Activated CD4-positive, alpha-beta T cell treated with anti-CD3 and anti-CD28 coated beads, Interleukin-2, amount 10 ng/mL, durations not matched to agents 24 days and 14 days (primary cell): ENCODE measurements at regions of chr10 and their contacts with region 1.

Region 1: DNA sequence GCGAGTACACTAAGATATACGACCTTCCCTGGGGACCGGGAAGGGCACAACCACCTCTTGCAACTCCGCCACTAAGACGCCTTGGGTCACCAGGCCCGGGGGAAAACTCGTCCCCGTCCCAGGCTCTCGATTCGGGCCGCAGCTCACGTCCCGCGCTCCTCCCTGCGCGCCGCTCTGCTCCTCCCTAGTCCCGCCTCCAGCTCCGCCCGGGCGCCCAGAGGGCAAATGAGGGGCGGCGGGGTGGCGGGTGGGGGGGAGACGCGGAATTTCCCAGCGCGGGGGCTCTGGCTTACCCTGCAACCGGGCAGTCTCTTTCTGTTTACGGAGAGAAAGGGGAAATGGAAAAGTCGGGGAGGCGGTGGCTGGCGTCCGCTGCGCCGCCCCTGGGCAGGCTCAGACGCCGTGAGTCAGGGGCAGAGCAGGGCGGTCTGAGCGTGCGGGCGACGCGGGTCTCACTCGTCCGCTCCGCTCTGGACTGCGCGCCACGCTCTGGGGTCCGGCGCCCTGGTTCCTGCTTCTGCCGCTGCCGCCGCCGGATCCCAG is at the start of gene MAP3K8:
- DNase-seq: peak; percentile 96
- H3K4me3 Mint-ChIP-seq: peak within 1 kb of the TSS; percentile 94
- H3K27ac Mint-ChIP-seq: peak within 1 kb of the TSS; percentile 82
- H3K4me1 Mint-ChIP-seq: peaks cover 55% of the 10 kb centered on the region
- H3K27me3 Mint-ChIP-seq: no peaks in the 10 kb centered on the region
- total RNA-seq, gene MAP3K8: 20.9 and 22.0 TPM in 2 replicates

Region 2: DNA sequence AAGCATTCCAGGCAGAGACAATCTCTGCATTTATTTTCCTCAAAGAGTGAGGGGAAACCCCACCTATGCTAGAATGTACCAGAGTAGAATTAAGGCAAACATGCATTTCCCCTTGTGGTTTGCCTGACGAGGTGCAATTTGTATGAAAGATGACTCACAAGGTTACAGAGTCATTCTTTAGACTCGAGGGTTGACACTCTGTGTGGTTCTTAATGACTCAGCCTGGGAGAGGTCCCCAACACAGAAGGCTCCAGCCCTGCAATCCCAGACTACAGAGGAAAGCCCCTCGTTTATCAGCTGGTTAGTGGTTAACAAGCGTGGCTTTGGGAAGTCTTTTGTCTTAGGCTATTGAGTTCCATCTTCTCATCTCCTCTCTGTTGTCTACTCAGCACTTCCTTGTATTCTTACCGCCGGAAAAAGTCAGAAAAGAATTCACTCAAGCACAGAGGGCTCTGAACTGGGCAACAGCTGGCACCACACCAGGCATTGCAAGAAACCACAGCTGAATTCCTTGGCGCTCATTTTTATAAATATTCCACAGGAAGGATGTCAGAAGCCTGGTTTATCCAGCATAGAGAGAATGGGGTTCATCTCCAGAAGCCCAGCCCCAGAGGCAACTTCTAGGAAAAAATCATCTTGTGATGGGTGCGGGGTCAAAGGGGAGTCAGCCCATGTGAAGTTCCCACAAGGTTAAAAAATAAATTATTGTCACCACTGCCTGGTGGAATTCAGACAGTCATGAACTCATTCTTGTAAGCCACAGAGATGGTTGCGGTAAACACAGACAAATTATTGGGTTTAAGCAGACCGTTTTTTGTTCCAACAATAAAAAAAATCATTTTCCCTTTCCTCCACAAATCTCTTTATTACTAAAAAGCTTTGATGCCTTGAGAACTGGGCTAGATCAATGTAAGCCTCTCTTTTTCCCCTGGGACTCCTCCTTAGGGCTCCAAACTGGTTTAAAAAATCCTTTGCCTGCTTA is 774.5 kb before region 1 on chr10:
- intact Hi-C with region 1: loop called (anchors 10 kb)
- DNase-seq: peak; percentile 89
- H3K4me3 Mint-ChIP-seq: peak overlapping the region; percentile 56
- H3K27ac Mint-ChIP-seq: peak overlapping the region; percentile 67
- H3K4me1 Mint-ChIP-seq: peaks cover 18% of the 10 kb centered on the region
- H3K27me3 Mint-ChIP-seq: peaks cover 46% of the 10 kb centered on the region

Region 3: GRCh38 chr10:30027057-30028005 is 406.5 kb before region 1 on chr10:
- intact Hi-C with region 1: loop called (anchors 1 kb)
- DNase-seq: peak; percentile 98
- H3K4me3 Mint-ChIP-seq: peak overlapping the region; percentile 83
- H3K27ac Mint-ChIP-seq: peak overlapping the region; percentile 86
- H3K4me1 Mint-ChIP-seq: peaks cover 43% of the 10 kb centered on the region
- H3K27me3 Mint-ChIP-seq: peaks cover 20% of the 10 kb centered on the region

Region 4: DNA sequence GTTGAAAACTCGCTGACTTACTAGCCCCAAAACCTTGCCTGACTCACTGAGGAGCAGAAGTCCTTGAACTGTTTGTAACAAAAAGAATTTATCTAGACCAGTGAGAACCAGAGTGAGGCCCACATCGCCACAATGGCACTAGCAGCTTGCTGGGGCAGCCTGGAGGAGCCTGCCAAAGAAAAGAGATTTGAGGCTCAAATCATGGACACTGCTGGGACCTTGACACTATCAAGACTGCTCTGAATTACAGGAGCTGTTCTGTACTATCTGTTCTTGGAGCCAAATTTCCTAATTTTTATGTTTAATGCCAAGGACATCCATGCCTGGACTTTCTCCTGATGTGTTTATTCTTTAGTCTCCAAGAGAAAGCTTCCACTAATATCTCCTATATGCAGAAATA is 292.4 kb before region 1 on chr10:
- intact Hi-C with region 1: no loop called
- DNase-seq: no peak
- H3K4me3 Mint-ChIP-seq: no peak overlapping the region
- H3K27ac Mint-ChIP-seq: no peak overlapping the region
- H3K4me1 Mint-ChIP-seq: no peaks in the 10 kb centered on the region
- H3K27me3 Mint-ChIP-seq: peaks cover 8% of the 10 kb centered on the region

Region 5: GRCh38 chr10:30447125-30447799 is 13.5 kb after region 1 on chr10:
- intact Hi-C with region 1: no loop called
- DNase-seq: no peak
- H3K4me3 Mint-ChIP-seq: no peak overlapping the region
- H3K27ac Mint-ChIP-seq: no peak overlapping the region
- H3K4me1 Mint-ChIP-seq: peaks cover 26% of the 10 kb centered on the region
- H3K27me3 Mint-ChIP-seq: no peaks in the 10 kb centered on the region

Region 6: GRCh38 chr10:30502266-30503060 is 68.7 kb after region 1 on chr10:
- intact Hi-C with region 1: loop called (anchors 2 kb)
- DNase-seq: peak; percentile 90
- H3K4me3 Mint-ChIP-seq: peak overlapping the region; percentile 38
- H3K27ac Mint-ChIP-seq: peak overlapping the region; percentile 62
- H3K4me1 Mint-ChIP-seq: peaks cover 71% of the 10 kb centered on the region
- H3K27me3 Mint-ChIP-seq: peaks cover 1% of the 10 kb centered on the region

Region 7: GRCh38 chr10:30534465-30535144 is 100.8 kb after region 1 on chr10:
- intact Hi-C with region 1: loop called (anchors 1 kb)
- DNase-seq: peak; percentile 92
- H3K4me3 Mint-ChIP-seq: no peak overlapping the region
- H3K27ac Mint-ChIP-seq: peak overlapping the region; percentile 61
- H3K4me1 Mint-ChIP-seq: peaks cover 40% of the 10 kb centered on the region
- H3K27me3 Mint-ChIP-seq: peaks cover 2% of the 10 kb centered on the region

Region 8: GRCh38 chr10:31101123-31101522 is 667.3 kb after region 1 on chr10:
- intact Hi-C with region 1: loop called (anchors 5 kb)
- DNase-seq: peak; percentile 89
- H3K4me3 Mint-ChIP-seq: peak overlapping the region; percentile 76
- H3K27ac Mint-ChIP-seq: peak overlapping the region; percentile 93
- H3K4me1 Mint-ChIP-seq: peaks cover 60% of the 10 kb centered on the region
- H3K27me3 Mint-ChIP-seq: no peaks in the 10 kb centered on the region

Region 9: DNA sequence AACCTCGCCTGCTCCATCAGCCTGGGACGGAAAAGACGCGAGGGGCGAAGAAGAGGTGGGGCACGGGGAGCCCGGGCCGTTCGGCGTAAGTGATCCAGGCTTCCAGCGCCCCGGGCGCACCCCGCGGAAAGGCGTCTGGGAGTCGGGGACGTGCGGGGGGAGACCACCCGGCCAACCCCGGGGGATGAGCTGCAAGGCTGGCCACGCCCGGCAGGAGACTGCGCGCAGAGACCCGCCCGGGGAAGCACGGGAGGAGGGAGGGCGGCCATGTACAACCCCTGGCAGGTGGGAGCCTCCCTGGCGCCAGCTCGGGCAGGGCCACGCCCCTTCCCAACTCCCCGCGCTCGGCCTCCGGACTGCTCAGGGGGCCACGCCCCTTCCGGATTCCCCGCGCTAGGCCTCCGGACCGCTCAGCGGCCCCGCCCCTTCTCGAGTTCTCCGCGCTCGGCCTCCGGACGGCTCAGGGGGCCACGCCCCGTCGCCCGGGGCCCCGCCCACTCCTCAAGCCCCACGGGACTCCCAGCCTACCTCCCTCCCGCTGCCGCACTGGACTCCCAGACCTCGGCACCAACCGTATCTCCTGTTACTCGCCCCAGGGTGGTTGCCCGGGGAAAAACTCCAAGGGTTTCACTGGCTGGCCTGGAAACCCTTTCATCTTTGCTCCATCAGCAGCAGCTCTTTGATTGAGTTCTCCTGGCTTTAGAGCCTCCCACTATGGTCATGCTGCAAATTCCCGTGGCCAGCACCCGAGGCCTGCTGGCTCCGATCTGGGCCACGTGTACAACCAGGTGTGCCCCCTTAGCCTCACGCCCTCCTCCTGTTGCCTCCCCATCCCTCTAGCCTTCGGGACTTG is 1169.7 kb after region 1 on chr10:
- intact Hi-C with region 1: loop called (anchors 10 kb)
- DNase-seq: peak; percentile 95
- H3K4me3 Mint-ChIP-seq: peak overlapping the region; percentile 88
- H3K27ac Mint-ChIP-seq: no peak overlapping the region
- H3K4me1 Mint-ChIP-seq: peaks cover 26% of the 10 kb centered on the region
- H3K27me3 Mint-ChIP-seq: peaks cover 3% of the 10 kb centered on the region